Transverse colon (tissue), 4 donors: ENCODE measurements at regions of chr11 and their contacts with region 1.

Region 1: GRCh38 chr11:16605894-16606783 is 132.3 kb upstream of the C11orf58 start:
- DNase-seq: peak; percentile 92
- H3K4me3 ChIP-seq: peak overlapping the region; percentile 36 to 59 (median 48)
- H3K27ac ChIP-seq: peak overlapping the region; percentile 75 to 84 (median 80)
- H3K4me1 ChIP-seq: peaks cover 12 to 39% (median 25%) of the 10 kb centered on the region in 4 donors
- H3K27me3 ChIP-seq: peaks cover 99% of the 10 kb centered on the region
- CTCF ChIP-seq: peak; percentile 95 to 98 (median 97)
- EP300 ChIP-seq: no peak
- POLR2A ChIP-seq: no peak

Region 2: GRCh38 chr11:15649371-15650104 is 956.6 kb before region 1 on chr11:
- in situ Hi-C with region 1: loop called (anchors 10 kb)
- intact Hi-C with region 1: loop called (anchors 5 kb)
- DNase-seq: no peak
- H3K4me3 ChIP-seq: no peak overlapping the region
- H3K27ac ChIP-seq: peak overlapping the region; percentile 30 to 81 (median 69)
- H3K4me1 ChIP-seq: peaks cover 8 to 16% (median 12%) of the 10 kb centered on the region in 4 donors
- H3K27me3 ChIP-seq: peaks cover 5% of the 10 kb centered on the region
- CTCF ChIP-seq: no peak
- EP300 ChIP-seq: no peak
- POLR2A ChIP-seq: no peak

Region 3: DNA sequence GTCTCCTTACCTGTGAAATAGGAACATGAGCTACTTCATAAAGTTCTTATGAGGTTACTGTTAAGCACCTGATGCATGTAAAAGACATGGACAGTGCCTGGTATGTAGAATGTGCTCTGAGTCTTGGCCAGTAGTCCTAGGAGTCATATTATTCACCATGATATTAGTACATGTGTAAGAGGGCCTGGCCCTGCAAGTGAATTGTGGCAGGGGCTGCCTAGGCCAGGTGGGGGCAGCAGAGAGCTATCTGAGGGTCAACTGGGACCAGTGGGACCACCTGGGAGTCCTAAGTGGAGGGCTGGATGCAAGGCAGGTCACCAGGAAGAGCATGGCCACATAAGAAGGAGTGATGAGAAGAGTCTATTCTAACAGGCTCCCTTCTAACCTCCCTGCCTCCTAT is 779.3 kb before region 1 on chr11:
- in situ Hi-C with region 1: loop called in 2 of 4 experiments (anchors 25 kb)
- intact Hi-C with region 1: no loop called
- DNase-seq: peak; percentile 32
- H3K4me3 ChIP-seq: no peak overlapping the region
- H3K27ac ChIP-seq: no peak overlapping the region
- H3K4me1 ChIP-seq: peaks cover 0 to 4% (median 0%) of the 10 kb centered on the region in 4 donors
- H3K27me3 ChIP-seq: no peaks in the 10 kb centered on the region
- CTCF ChIP-seq: peak in 4 of 5 experiments; percentile 42 to 52 (median 45)
- EP300 ChIP-seq: no peak
- POLR2A ChIP-seq: no peak

Region 4: DNA sequence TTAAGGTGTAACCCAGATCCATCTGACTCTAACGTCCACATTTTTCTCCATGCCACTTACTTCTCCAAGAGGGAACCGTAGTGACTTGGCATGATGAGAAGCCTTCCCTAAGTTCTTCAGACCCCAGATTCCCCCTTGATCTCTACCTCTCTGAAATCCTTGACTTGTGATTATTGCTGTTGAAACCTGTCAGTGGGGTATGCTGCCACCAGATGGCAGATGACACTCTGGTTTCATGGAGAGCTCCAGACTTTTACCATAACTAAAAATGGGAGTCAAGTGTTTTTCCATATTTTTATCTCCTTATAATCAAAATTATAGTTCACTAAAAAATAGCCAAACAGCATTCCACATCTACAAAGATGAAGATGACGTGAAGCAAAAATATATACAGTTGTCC is 754.0 kb before region 1 on chr11:
- in situ Hi-C with region 1: loop called in 3 of 4 experiments (anchors 25 kb)
- intact Hi-C with region 1: no loop called
- DNase-seq: peak; percentile 36
- H3K4me3 ChIP-seq: no peak overlapping the region
- H3K27ac ChIP-seq: no peak overlapping the region
- H3K4me1 ChIP-seq: peaks cover 0 to 19% (median 2%) of the 10 kb centered on the region in 4 donors
- H3K27me3 ChIP-seq: no peaks in the 10 kb centered on the region
- CTCF ChIP-seq: peak; percentile 21 to 65 (median 49)
- EP300 ChIP-seq: no peak
- POLR2A ChIP-seq: no peak

Region 5: GRCh38 chr11:15911377-15912044 is 694.6 kb before region 1 on chr11:
- in situ Hi-C with region 1: loop called in 1 of 4 experiments (anchors 25 kb)
- intact Hi-C with region 1: no loop called
- DNase-seq: no peak
- H3K4me3 ChIP-seq: no peak overlapping the region
- H3K27ac ChIP-seq: no peak overlapping the region
- H3K4me1 ChIP-seq: no peaks in the 10 kb centered on the region
- H3K27me3 ChIP-seq: no peaks in the 10 kb centered on the region
- CTCF ChIP-seq: no peak
- EP300 ChIP-seq: no peak
- POLR2A ChIP-seq: no peak

Region 6: DNA sequence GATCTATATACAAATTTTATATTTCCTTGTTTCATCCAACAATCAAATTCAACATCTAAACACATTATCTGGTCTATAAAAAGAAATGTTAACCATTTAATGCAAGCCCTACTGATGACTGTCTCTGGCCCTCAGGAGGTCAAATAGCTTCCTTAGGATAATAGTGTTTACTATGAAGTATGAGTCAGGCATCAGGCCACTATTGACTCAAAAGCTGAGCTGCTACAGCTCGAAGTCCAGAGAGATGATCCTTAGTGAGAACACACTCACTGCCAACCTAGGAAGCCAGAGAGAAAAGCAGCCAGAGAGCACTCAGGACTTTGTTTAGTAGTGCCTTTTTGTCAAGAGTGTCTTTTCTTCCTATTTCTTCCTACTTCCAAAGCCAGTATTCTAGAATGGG is 421.6 kb before region 1 on chr11:
- in situ Hi-C with region 1: loop called in 1 of 4 experiments (anchors 25 kb)
- intact Hi-C with region 1: no loop called
- DNase-seq: peak; percentile 14
- H3K4me3 ChIP-seq: no peak overlapping the region
- H3K27ac ChIP-seq: no peak overlapping the region
- H3K4me1 ChIP-seq: peaks cover 0 to 12% (median 2%) of the 10 kb centered on the region in 4 donors
- H3K27me3 ChIP-seq: no peaks in the 10 kb centered on the region
- CTCF ChIP-seq: no peak
- EP300 ChIP-seq: no peak
- POLR2A ChIP-seq: no peak

Region 7: DNA sequence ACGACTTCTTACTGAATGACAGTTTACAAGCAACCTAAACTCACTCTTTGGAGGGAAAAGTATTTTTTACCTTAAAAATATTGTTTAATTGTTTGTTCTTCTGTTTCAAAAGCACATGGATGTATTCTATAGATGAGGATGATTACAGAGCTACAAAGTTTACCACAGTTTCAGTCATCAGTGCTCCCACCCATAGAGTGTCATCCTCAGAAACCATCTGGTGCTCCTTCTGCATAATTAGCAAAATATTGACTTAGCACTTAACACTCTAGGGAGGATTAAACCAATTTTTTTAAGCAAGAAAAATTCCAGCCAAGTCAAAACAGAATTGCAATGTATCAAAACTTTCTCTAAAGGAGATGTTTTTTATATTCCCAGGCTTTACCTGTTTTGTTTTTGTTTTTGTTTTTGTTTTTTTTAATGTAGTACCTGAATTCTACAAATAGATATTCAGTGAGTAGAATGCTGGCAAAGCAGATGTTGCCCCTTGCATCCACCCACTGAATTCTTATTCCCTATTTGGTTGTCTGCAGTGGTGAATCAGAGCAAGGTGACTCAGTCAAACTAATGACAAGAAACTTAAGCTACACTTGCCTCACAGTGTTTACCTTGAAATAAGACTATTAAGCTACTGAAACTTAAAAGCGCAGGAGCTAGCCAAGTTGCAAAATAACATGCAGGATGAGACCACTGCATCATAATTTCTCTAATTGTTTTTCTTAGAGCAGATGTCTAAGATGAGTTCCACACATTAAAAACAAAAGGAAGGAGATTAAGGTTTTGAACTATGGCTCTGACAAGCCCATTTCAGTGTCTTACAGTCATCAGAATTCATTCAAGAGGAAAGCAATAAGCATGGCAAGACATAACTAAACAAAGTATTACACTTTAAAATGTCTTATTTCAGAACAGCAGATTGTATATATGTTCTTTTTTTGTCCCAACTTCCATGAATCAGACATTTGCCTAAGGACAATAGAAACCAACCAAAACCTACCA is 94.7 kb before region 1 on chr11:
- in situ Hi-C with region 1: no loop called
- intact Hi-C with region 1: no loop called
- DNase-seq: no peak
- H3K4me3 ChIP-seq: no peak overlapping the region
- H3K27ac ChIP-seq: no peak overlapping the region
- H3K4me1 ChIP-seq: no peaks in the 10 kb centered on the region
- H3K27me3 ChIP-seq: no peaks in the 10 kb centered on the region
- CTCF ChIP-seq: no peak
- EP300 ChIP-seq: no peak
- POLR2A ChIP-seq: no peak

Region 8: DNA sequence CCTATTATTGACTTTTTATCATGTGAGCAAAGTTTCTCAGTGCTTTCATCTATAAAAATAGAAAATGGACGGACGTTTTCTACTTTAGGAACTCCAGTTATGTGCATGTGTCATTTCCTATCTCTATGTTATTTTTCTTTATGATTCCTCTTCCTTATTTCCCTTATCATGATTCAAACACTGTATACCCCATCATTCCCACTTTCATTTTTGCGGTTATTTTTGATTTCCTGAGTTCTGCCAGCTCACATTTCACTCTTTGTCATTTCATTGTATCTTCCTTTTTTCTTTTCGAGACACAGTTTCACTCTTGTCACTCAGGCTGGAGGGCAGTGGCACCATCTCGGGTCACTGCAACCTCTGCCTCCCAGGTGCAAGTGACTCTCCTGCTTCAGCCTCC is 153.7 kb after region 1 on chr11:
- in situ Hi-C with region 1: no loop called
- intact Hi-C with region 1: no loop called
- DNase-seq: no peak
- H3K4me3 ChIP-seq: no peak overlapping the region
- H3K27ac ChIP-seq: no peak overlapping the region
- H3K4me1 ChIP-seq: no peaks in the 10 kb centered on the region
- H3K27me3 ChIP-seq: no peaks in the 10 kb centered on the region
- CTCF ChIP-seq: no peak
- EP300 ChIP-seq: no peak
- POLR2A ChIP-seq: no peak

Region 9: DNA sequence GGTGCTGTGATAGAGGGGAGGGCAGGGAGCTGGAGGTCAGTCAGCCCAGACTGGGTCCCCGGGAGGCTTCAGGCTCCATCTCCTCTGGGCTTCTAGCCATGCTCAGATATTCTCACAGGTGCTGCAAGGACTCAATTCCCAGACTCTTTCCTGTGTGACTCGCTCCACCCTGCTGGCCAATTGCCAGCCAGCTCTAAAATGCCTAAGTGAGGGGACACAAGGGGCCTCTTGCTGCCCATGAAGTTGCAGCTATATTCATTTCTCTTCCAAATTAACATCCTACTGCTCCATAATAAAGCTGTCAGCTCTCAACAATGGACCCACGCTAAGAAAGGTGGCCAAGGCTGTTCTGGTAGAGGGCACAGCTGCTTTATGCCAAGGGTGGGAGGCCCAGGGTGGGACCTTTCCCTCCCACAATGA is 306.6 kb after region 1 on chr11:
- in situ Hi-C with region 1: no loop called
- intact Hi-C with region 1: no loop called
- DNase-seq: no peak
- H3K4me3 ChIP-seq: no peak overlapping the region
- H3K27ac ChIP-seq: no peak overlapping the region
- H3K4me1 ChIP-seq: peaks cover 0 to 20% (median 13%) of the 10 kb centered on the region in 4 donors
- H3K27me3 ChIP-seq: no peaks in the 10 kb centered on the region
- CTCF ChIP-seq: no peak
- EP300 ChIP-seq: no peak
- POLR2A ChIP-seq: no peak